CD8-positive, alpha-beta T cell (primary cell): ENCODE measurements at regions of chr15 and their contacts with region 1.

Region 1: GRCh38 chr15:45118131-45118588 is 4.0 kb downstream of the DUOXA2 start:
- DNase-seq: peak; percentile 67 to 90 (median 85)
- ATAC-seq: peak; percentile 99
- H3K4me3 ChIP-seq: peak overlapping the region; percentile 33 to 38
- H3K4me3 Mint-ChIP-seq: peak overlapping the region; percentile 78
- H3K27ac ChIP-seq: no peak overlapping the region
- H3K27ac Mint-ChIP-seq: no peak overlapping the region
- H3K4me1 ChIP-seq: peaks cover 35% of the 10 kb centered on the region
- H3K4me1 Mint-ChIP-seq: peaks cover 33% of the 10 kb centered on the region
- H3K27me3 ChIP-seq: peaks cover 18 to 31% of the 10 kb centered on the region in 2 experiments
- H3K27me3 Mint-ChIP-seq: peaks cover 70% of the 10 kb centered on the region
- CTCF ChIP-seq: peak; percentile 100

Region 2: DNA sequence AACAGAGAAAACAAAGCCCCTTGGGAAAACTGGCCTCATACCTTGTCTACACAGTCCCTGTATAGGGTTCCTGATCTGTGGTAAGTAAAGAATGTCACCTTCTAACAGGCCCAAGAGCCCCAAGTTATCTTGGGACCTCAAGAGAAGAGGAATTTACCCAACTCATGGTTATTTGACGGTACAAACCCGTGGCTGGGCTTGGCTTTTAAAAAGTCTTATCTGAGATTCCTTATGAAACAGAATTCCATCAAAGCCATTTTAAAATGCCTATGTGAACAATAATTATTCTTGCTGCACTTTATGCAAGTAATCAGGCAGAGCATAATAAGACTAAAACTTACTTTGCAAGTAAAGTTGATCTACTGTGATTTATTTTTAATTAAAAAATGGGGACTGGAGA is 109.1 kb before region 1 on chr15:
- CTCF ChIA-PET with region 1: no interaction called
- POLR2A ChIA-PET with region 1: no interaction called
- intact Hi-C with region 1: no loop called
- DNase-seq: no peak
- ATAC-seq: no peak
- H3K4me3 ChIP-seq: no peak overlapping the region
- H3K4me3 Mint-ChIP-seq: no peak overlapping the region
- H3K27ac ChIP-seq: no peak overlapping the region
- H3K27ac Mint-ChIP-seq: no peak overlapping the region
- H3K4me1 ChIP-seq: no peaks in the 10 kb centered on the region
- H3K4me1 Mint-ChIP-seq: no peaks in the 10 kb centered on the region
- H3K27me3 ChIP-seq: no peaks in the 10 kb centered on the region
- H3K27me3 Mint-ChIP-seq: peaks cover 6% of the 10 kb centered on the region
- CTCF ChIP-seq: no peak

Region 3: GRCh38 chr15:45106002-45106790 is 12.0 kb before region 1 on chr15:
- CTCF ChIA-PET with region 1: interaction called, 11 read pairs
- POLR2A ChIA-PET with region 1: interaction called, 3 read pairs
- intact Hi-C with region 1: no loop called
- DNase-seq: no peak
- ATAC-seq: no peak
- H3K4me3 ChIP-seq: no peak overlapping the region
- H3K4me3 Mint-ChIP-seq: no peak overlapping the region
- H3K27ac ChIP-seq: no peak overlapping the region
- H3K27ac Mint-ChIP-seq: no peak overlapping the region
- H3K4me1 ChIP-seq: no peaks in the 10 kb centered on the region
- H3K4me1 Mint-ChIP-seq: peaks cover 2% of the 10 kb centered on the region
- H3K27me3 ChIP-seq: peaks cover 4 to 8% of the 10 kb centered on the region in 2 experiments
- H3K27me3 Mint-ChIP-seq: peaks cover 40% of the 10 kb centered on the region
- CTCF ChIP-seq: no peak

Region 4: GRCh38 chr15:45136378-45136764 is 18.2 kb after region 1 on chr15:
- CTCF ChIA-PET with region 1: interaction called, 29 read pairs
- POLR2A ChIA-PET with region 1: no interaction called
- intact Hi-C with region 1: no loop called
- DNase-seq: peak in 2 of 9 experiments; percentile 32 to 47
- ATAC-seq: peak; percentile 52
- H3K4me3 ChIP-seq: no peak overlapping the region
- H3K4me3 Mint-ChIP-seq: peak overlapping the region; percentile 58
- H3K27ac ChIP-seq: no peak overlapping the region
- H3K27ac Mint-ChIP-seq: no peak overlapping the region
- H3K4me1 ChIP-seq: peaks cover 7% of the 10 kb centered on the region
- H3K4me1 Mint-ChIP-seq: peaks cover 13% of the 10 kb centered on the region
- H3K27me3 ChIP-seq: peaks cover 13 to 14% of the 10 kb centered on the region in 2 experiments
- H3K27me3 Mint-ChIP-seq: peaks cover 33% of the 10 kb centered on the region
- CTCF ChIP-seq: no peak

Region 5: DNA sequence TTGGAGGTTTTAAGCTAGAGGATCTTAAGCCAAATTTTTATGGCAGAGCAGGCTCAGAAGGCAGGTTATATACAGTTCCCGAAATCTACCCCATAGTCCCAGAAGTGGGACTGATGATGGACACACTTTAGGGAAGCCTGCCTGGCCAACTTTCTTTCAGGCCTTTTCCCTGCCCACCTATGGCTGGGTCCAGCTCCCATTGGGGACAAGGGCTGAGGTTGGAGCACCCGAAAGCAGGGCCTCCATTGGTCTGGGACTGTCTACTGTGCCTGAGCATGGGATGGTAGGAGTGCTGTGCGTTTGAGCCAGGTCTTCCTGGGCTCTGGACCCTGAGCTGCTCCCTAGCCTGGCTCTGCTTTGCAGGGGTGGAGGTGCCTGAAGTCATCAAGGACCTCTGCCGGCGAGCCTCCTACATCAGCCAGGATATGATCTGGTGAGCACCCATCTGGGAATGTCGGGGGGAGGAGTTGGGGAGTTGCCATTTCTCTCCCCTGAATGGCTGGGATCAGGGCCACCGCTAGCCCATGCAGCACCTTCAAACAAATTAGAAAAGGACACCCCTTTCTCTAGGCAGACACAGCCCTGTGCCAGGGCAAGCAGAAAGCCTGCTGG is 32.2 kb after region 1 on chr15:
- CTCF ChIA-PET with region 1: interaction called, 10 read pairs
- POLR2A ChIA-PET with region 1: no interaction called
- intact Hi-C with region 1: no loop called
- DNase-seq: no peak
- ATAC-seq: no peak
- H3K4me3 ChIP-seq: no peak overlapping the region
- H3K4me3 Mint-ChIP-seq: no peak overlapping the region
- H3K27ac ChIP-seq: no peak overlapping the region
- H3K27ac Mint-ChIP-seq: no peak overlapping the region
- H3K4me1 ChIP-seq: no peaks in the 10 kb centered on the region
- H3K4me1 Mint-ChIP-seq: no peaks in the 10 kb centered on the region
- H3K27me3 ChIP-seq: no peaks in the 10 kb centered on the region
- H3K27me3 Mint-ChIP-seq: no peaks in the 10 kb centered on the region
- CTCF ChIP-seq: no peak